Psoas muscle (tissue), 8 donors: ENCODE measurements at regions of chrX and their contacts with region 1.

Region 1: GRCh38 chrX:152878976-152879755 is 18.7 kb upstream of the ZNF185 start:
- DNase-seq: no peak
- ATAC-seq: no peak
- H3K4me3 ChIP-seq: no peak overlapping the region
- H3K27ac ChIP-seq: no peak overlapping the region
- H3K4me1 ChIP-seq: no peaks in the 10 kb centered on the region
- H3K27me3 ChIP-seq: peaks cover 0 to 8% (median 0%) of the 10 kb centered on the region in 3 donors
- CTCF ChIP-seq: no peak

Region 2: GRCh38 chrX:152842772-152843338 is 36.3 kb before region 1 on chrX:
- intact Hi-C with region 1: no loop called
- DNase-seq: no peak
- ATAC-seq: no peak
- H3K4me3 ChIP-seq: no peak overlapping the region
- H3K27ac ChIP-seq: no peak overlapping the region
- H3K4me1 ChIP-seq: no peaks in the 10 kb centered on the region
- H3K27me3 ChIP-seq: peaks cover 0 to 5% (median 0%) of the 10 kb centered on the region in 3 donors
- CTCF ChIP-seq: no peak

Region 3: GRCh38 chrX:152915527-152916241 is 36.5 kb after region 1 on chrX:
- intact Hi-C with region 1: no loop called
- DNase-seq: no peak
- ATAC-seq: peak in 2 of 4 donors; percentile 34 to 38
- H3K4me3 ChIP-seq: no peak overlapping the region
- H3K27ac ChIP-seq: no peak overlapping the region
- H3K4me1 ChIP-seq: no peaks in the 10 kb centered on the region
- H3K27me3 ChIP-seq: peaks cover 0 to 5% (median 0%) of the 10 kb centered on the region in 3 donors
- CTCF ChIP-seq: peak; percentile 15

Region 4: GRCh38 chrX:152936357-152936756 is 57.2 kb after region 1 on chrX:
- intact Hi-C with region 1: loop called in 1 of 2 experiments (anchors 10 kb)
- DNase-seq: no peak
- ATAC-seq: no peak
- H3K4me3 ChIP-seq: no peak overlapping the region
- H3K27ac ChIP-seq: no peak overlapping the region
- H3K4me1 ChIP-seq: no peaks in the 10 kb centered on the region
- H3K27me3 ChIP-seq: peaks cover 0 to 11% (median 0%) of the 10 kb centered on the region in 3 donors
- CTCF ChIP-seq: no peak